Activated B cell treated with CpG ODN at 0.5 μM for 24 hours (primary cell): ENCODE measurements at regions of chrX and their contacts with region 1.

Region 1: DNA sequence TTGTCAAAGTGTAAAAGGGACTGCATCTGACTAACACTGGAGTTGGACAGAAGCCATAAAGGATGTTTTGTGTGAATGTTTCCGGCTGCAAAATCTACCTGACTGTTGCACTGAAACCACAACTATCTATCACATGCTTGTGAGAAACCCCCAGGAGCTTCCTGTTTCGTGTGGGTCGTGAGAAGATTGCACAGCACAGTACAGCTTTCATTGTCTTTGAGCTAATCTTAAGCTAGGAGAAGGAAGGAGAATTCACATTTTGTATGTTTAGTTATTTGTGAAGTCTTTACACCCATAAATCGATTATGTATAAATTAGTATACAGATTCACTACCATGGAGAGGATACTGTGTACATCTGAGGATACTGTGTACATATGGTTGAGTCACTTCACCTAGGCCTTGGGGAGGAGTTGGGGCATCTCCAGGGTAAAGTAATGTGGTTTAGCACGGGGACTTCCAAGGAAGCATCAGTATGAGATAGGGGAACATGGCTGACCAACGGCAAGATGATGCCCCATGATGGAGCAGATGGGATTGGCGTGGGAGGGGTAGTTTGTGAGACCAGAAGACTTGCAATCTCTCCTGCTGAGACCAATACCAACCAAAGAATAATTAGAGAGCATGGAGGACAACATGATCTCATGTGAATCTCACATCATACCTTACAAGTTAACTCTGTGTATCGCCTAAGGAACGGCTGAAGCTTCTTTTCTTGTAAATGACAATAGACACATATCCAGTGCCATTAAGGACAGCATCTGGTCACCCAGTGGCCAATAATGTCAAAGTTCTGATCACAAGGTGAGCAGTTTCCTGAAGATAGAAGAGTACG is 43.1 kb upstream of the FAM9C start:
- DNase-seq: no peak
- ATAC-seq: peak; percentile 65
- H3K4me3 Mint-ChIP-seq: peak overlapping the region; percentile 67
- H3K27ac Mint-ChIP-seq: peak overlapping the region; percentile 98
- H3K4me1 Mint-ChIP-seq: peaks cover 96% of the 10 kb centered on the region
- H3K27me3 Mint-ChIP-seq: no peaks in the 10 kb centered on the region
- CTCF ChIP-seq: no peak

Region 2: DNA sequence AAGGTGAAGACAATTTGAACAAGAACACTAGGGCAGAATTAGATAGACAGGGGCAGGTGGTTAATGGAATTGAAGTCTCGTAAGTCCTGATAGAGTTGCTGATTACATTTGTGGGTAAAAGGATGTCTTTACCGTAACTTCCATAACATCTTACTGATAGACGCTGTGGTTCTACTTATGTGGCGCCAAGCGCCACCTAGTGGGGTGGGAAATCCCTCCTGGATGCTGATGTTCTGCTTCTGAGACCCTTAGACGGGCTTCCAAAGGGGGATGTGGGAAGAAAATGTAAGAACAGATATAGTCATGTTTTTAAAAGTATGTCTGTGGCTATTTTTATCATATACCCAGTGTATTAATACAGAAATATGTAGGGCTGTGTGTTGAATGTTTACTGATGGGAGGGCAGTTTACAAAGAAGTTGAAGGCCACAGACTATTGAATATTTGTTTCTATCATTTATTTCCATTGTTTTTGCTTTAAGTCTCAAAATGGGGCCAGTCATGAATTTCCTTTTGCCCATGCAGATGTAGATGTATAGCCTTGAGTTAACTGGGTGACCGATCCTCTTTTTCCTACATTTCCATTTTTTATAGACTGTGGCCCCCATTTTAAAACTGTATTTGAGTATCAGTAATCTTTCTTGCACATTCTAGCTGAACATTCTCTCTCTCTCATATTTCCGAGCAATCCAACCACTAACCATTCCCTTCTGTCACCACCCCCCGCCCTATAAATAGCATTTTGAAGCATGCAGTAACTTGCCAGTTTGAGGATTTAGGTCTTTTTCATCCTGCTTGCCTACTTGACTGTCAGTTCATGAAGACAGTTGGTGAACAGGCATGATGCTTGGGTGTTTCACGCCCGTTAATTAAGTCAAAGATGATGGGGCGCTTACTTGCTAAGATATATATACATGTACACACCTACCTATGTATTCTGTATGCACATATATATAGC is 193.2 kb before region 1 on chrX:
- CTCF ChIA-PET with region 1: no interaction called
- POLR2A ChIA-PET with region 1: no interaction called
- intact Hi-C with region 1: loop called (anchors 5 kb)
- DNase-seq: peak; percentile 21
- ATAC-seq: peak; percentile 58
- H3K4me3 Mint-ChIP-seq: peak overlapping the region; percentile 41
- H3K27ac Mint-ChIP-seq: peak overlapping the region; percentile 41
- H3K4me1 Mint-ChIP-seq: peaks cover 52% of the 10 kb centered on the region
- H3K27me3 Mint-ChIP-seq: no peaks in the 10 kb centered on the region
- CTCF ChIP-seq: no peak

Region 3: DNA sequence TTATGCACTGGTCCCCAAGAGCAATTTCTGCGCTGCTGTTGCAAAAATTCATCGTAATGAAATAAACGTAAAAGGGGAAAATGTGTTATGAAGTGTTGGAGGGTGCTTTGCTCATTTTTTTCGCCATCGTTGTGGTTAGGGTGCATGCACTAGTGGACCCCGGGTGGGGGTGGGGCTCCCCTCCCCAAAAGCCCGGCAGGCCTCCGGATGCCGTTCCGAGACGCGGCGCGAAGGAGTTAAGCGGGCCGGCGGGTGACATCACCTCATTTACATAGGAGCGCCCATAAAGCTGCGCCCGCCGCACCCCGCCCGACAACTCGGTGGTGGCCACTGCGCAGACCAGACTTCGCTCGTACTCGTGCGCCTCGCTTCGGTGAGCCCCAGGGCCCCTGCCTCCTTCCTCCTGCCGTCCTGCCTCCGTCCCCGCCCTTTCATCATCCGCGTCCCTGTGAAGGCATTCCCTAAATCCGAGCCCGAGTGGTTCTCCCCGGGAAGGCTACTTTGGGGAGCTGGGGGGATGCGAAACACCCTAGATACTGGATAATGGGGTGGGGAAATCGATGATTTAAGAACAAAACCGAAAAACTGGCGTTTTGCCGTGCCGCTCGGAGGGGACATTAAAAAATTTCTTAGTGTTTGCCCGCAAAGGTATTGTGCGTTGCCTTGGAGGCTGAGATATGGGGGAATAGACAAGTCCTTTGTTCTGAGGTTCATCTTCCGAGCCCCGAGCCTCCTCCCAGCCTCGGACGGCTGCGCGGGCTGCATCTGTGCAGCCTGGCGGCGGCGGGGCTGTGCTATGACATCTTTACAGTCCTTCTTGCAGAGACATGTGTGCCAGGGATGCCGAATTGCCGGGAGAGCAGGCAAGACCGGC is 112.5 kb before region 1 on chrX and contains the start of gene TMSB4X:
- CTCF ChIA-PET with region 1: interaction called, 31 read pairs
- POLR2A ChIA-PET with region 1: interaction called, 847 read pairs
- intact Hi-C with region 1: loop called (anchors 1 kb)
- DNase-seq: peak; percentile 75
- ATAC-seq: peak; percentile 46
- H3K4me3 Mint-ChIP-seq: peak within 1 kb of the TSS; percentile 94
- H3K27ac Mint-ChIP-seq: peak within 1 kb of the TSS; percentile 97
- H3K4me1 Mint-ChIP-seq: peaks cover 58% of the 10 kb centered on the region
- H3K27me3 Mint-ChIP-seq: no peaks in the 10 kb centered on the region
- CTCF ChIP-seq: no peak
- total RNA-seq, gene TMSB4X: 5,922 and 6,273 TPM in 2 replicates

Region 4: GRCh38 chrX:13005661-13006473 is 81.7 kb before region 1 on chrX:
- CTCF ChIA-PET with region 1: interaction called, 29 read pairs
- POLR2A ChIA-PET with region 1: interaction called, 179 read pairs
- intact Hi-C with region 1: loop called (anchors 1 kb)
- DNase-seq: no peak
- ATAC-seq: peak; percentile 61
- H3K4me3 Mint-ChIP-seq: peak overlapping the region; percentile 84
- H3K27ac Mint-ChIP-seq: peak overlapping the region; percentile 97
- H3K4me1 Mint-ChIP-seq: peaks cover 80% of the 10 kb centered on the region
- H3K27me3 Mint-ChIP-seq: no peaks in the 10 kb centered on the region
- CTCF ChIP-seq: no peak

Region 5: DNA sequence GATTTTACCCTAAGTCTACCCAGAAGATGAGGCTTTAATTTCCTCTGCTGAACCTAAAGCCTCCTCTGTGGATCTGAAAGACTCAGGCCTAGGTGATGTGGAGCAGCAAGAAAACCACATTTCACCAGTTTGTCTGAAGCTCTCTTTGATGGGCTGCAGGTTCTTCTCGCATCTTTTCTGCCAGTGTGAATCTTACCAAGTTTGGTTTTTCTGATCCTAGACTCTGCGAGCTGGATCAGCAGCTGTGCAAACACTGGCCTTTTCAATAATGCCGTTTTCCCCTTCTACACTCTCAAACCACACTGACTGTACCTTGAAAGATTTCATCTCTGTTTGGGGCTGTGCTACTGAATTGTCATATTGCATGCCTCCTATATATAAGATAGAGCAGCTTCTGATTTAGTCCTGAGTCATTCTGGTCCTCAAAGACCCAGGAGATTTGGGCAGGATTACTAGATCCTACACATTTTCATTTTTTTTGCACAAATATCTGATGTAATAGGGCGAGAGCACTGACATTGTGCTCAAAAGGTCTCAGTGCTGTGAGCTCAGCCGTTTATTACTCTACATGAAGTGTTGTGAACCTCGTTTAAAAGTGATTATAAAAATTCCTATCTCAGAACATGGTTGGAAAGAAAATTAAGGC is 90.5 kb after region 1 on chrX:
- CTCF ChIA-PET with region 1: no interaction called
- POLR2A ChIA-PET with region 1: no interaction called
- intact Hi-C with region 1: no loop called
- DNase-seq: no peak
- ATAC-seq: no peak
- H3K4me3 Mint-ChIP-seq: no peak overlapping the region
- H3K27ac Mint-ChIP-seq: no peak overlapping the region
- H3K4me1 Mint-ChIP-seq: no peaks in the 10 kb centered on the region
- H3K27me3 Mint-ChIP-seq: no peaks in the 10 kb centered on the region
- CTCF ChIP-seq: no peak

Region 6: GRCh38 chrX:13254076-13254785 is 166.7 kb after region 1 on chrX:
- CTCF ChIA-PET with region 1: interaction called, 8 read pairs
- POLR2A ChIA-PET with region 1: interaction called, 6 read pairs
- intact Hi-C with region 1: loop called (anchors 2 kb)
- DNase-seq: no peak
- ATAC-seq: no peak
- H3K4me3 Mint-ChIP-seq: peak overlapping the region; percentile 28
- H3K27ac Mint-ChIP-seq: peak overlapping the region; percentile 74
- H3K4me1 Mint-ChIP-seq: peaks cover 72% of the 10 kb centered on the region
- H3K27me3 Mint-ChIP-seq: no peaks in the 10 kb centered on the region
- CTCF ChIP-seq: no peak

Region 7: GRCh38 chrX:13376857-13377549 is 289.5 kb after region 1 on chrX:
- CTCF ChIA-PET with region 1: no interaction called
- POLR2A ChIA-PET with region 1: no interaction called
- intact Hi-C with region 1: no loop called
- DNase-seq: no peak
- ATAC-seq: no peak
- H3K4me3 Mint-ChIP-seq: no peak overlapping the region
- H3K27ac Mint-ChIP-seq: no peak overlapping the region
- H3K4me1 Mint-ChIP-seq: peaks cover 18% of the 10 kb centered on the region
- H3K27me3 Mint-ChIP-seq: no peaks in the 10 kb centered on the region
- CTCF ChIP-seq: no peak

Region 8: DNA sequence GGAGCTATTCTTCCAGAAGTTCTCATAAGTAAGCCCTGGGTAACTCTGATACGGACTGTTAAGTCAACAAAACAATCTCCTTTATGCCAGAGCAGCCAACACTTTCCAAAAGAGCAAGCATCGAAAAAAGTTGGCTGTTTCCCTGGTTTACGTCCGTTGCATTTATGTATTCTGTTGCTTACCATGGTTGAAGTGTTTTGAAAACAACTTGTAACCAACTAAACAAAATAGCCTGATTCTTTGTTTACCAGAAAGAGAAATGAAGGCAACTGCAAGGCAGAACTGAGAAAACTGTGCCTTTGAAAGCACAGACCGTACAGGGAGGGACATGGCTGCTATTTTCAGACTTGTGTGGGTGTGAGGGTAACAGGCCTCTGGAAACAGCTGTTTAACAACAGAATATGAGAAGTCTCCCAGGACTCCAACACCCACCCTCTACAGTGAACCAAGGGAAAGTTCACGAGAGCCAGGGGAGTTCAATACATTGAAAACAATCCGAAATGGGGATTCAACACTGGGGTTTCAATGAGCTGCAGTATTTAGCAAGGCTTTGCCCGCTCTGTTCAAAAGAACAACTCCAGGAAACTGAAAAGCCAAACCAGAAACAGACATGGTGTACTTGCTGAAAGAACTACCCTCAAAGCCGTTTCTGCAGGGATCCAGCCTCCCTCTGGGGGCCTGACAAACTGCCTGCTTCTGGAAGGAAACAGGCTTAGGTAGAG is 386.1 kb after region 1 on chrX:
- CTCF ChIA-PET with region 1: interaction called, 5 read pairs
- POLR2A ChIA-PET with region 1: no interaction called
- intact Hi-C with region 1: loop called (anchors 5 kb)
- DNase-seq: no peak
- ATAC-seq: peak; percentile 81
- H3K4me3 Mint-ChIP-seq: peak overlapping the region; percentile 78
- H3K27ac Mint-ChIP-seq: peak overlapping the region; percentile 97
- H3K4me1 Mint-ChIP-seq: peaks cover 61% of the 10 kb centered on the region
- H3K27me3 Mint-ChIP-seq: no peaks in the 10 kb centered on the region
- CTCF ChIP-seq: no peak

Region 9: DNA sequence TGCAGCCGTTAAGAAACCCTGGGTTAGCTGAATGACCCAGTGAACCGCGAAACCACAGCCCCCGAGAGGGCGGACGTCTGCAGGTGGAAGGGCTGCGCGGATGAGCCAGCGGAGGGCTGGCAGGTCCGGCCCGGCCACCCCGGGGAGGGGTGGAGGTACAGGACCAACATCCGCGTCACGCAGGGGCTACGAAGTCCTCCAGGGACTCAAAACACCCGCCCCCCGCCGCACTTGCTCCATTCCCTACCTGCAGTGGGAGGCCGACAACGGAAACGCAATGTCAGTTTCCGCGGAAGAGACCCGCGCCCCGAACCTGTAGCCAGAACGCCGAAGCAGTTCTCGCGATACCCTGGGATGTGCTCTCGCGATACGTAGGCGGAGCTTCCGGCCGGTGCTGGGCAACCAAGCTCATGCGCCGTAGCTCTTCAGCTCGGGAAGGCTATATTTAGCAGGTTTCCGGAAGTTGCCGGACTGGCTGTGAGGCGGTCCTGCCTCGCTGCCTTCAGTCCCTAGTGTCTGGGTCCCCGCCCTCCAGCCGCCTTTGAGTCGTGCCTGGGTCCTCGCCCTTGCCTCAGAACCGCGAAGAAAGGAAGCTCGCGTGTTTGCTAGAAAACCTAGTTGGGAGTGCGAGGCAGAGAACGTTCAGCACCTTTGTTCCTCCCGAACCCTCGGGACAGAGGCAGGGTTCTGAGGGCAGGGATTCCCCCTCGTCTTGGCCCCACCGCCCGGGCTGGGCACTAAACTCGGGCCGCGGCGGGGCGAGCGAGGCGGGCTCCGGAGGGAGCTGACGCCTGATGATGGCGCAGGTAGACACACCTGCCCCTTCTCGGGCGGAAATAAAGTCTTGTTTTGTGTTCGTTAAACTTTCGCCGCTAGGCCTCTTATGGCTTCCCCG is 647.0 kb after region 1 on chrX and contains the starts of genes OFD1 and TRAPPC2:
- CTCF ChIA-PET with region 1: no interaction called
- POLR2A ChIA-PET with region 1: no interaction called
- intact Hi-C with region 1: loop called (anchors 1 kb)
- DNase-seq: peak; percentile 80
- ATAC-seq: peak; percentile 81
- H3K4me3 Mint-ChIP-seq: peak within 1 kb of the TSS; percentile 93
- H3K27ac Mint-ChIP-seq: peak within 1 kb of the TSS; percentile 92
- H3K4me1 Mint-ChIP-seq: peaks cover 60% of the 10 kb centered on the region
- H3K27me3 Mint-ChIP-seq: no peaks in the 10 kb centered on the region
- CTCF ChIP-seq: no peak
- total RNA-seq, gene OFD1: 57.3 and 61.4 TPM in 2 replicates
- total RNA-seq, gene TRAPPC2: 24.7 and 26.7 TPM in 2 replicates